HepG2 (cell line): ENCODE measurements at regions of chr22 and their contacts with region 1.

Region 1: GRCh38 chr22:42614312-42615091 is at the start of gene POLDIP3:
- DNase-seq: peak; percentile 93
- ATAC-seq: peak; percentile 79
- H3K4me3 ChIP-seq: peak within 1 kb of the TSS; percentile 75 to 90 (median 78)
- H3K27ac ChIP-seq: peak within 1 kb of the TSS; percentile 93
- H3K4me1 ChIP-seq: peaks cover 56% of the 10 kb centered on the region
- H3K27me3 ChIP-seq: no peaks in the 10 kb centered on the region; a peak in 1 of 5 replicates
- CTCF ChIP-seq: peak; percentile 75
- EP300 ChIP-seq: no peak
- POLR2A ChIP-seq: peak; percentile 51 to 61; a peak in 1 of 4 replicates
- RAD21 ChIP-seq: peak; percentile 40; the same call in 1 of the 2 replicates
- total RNA-seq, gene POLDIP3: 47.4 and 64.1 TPM in 2 replicates

Region 2: DNA sequence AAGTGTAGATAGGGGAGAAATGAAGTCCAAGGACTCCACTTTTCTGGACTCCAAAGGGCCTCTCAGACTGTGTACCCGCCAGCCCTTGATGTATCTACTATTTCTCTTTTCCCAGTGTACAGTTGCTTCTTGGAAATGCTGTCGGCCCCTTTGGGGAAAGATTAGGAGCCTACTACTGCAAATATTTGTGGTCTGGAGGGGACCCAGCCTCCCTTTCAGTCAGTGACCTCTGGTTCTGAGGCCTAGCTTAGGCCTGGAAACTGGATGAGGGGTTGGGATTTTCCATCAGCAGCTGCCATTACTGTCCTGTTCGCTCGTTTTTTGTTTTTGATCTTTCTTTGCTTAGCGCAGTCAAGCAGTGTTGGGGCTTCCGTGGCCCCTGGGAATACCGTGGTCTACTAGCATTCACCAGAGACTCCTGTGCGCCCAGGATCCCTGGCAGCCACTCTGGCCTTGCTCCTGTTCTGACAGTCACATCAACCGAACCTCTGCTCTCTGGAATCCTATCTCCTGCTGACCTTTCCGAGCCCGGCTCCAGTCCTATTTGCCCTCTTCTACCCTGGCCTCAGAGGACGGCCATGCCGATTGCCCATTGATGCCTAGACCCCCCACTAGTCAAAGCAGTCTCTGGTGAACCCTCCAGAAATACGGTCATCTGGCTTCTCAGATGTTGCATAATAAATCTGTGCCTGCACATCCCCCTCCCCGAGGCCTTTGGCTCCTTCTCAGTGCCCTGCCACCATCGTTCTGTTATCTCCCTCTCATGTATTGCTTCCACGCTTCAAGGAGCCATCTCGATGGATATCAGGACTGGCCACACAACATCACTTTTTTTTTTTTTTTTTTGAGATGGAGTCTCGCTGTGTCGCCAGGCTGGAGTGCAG is 93.6 kb before region 1 on chr22:
- CTCF ChIA-PET with region 1: no interaction called
- POLR2A ChIA-PET with region 1: interaction called, 13 read pairs
- in situ Hi-C with region 1: no loop called
- intact Hi-C with region 1: loop called (anchors 10 kb)
- DNase-seq: peak; percentile 94
- ATAC-seq: peak; percentile 69
- H3K4me3 ChIP-seq: peak overlapping the region; percentile 59 to 83 (median 76)
- H3K27ac ChIP-seq: peak overlapping the region; percentile 86
- H3K4me1 ChIP-seq: peaks cover 50% of the 10 kb centered on the region
- H3K27me3 ChIP-seq: no peaks in the 10 kb centered on the region; a peak in 1 of 5 replicates
- CTCF ChIP-seq: no peak
- EP300 ChIP-seq: peak in 1 of 2 experiments; percentile 97; a peak in 3 of 4 replicates
- POLR2A ChIP-seq: peak; percentile 39 to 51; a peak in 3 of 4 replicates
- RAD21 ChIP-seq: no peak

Region 3: GRCh38 chr22:42562238-42562665 is 52.2 kb before region 1 on chr22:
- CTCF ChIA-PET with region 1: no interaction called
- POLR2A ChIA-PET with region 1: interaction called, 10 read pairs
- in situ Hi-C with region 1: no loop called
- intact Hi-C with region 1: no loop called
- DNase-seq: peak; percentile 41
- ATAC-seq: peak; percentile 40
- H3K4me3 ChIP-seq: peak overlapping the region in 1 of 3 experiments; percentile 25; a peak in 2 of 6 replicates
- H3K27ac ChIP-seq: peak overlapping the region; percentile 43
- H3K4me1 ChIP-seq: peaks cover 33% of the 10 kb centered on the region
- H3K27me3 ChIP-seq: no peaks in the 10 kb centered on the region
- CTCF ChIP-seq: no peak
- EP300 ChIP-seq: peak in 1 of 2 experiments; percentile 45; a peak in 2 of 4 replicates
- POLR2A ChIP-seq: no peak
- RAD21 ChIP-seq: no peak

Region 4: DNA sequence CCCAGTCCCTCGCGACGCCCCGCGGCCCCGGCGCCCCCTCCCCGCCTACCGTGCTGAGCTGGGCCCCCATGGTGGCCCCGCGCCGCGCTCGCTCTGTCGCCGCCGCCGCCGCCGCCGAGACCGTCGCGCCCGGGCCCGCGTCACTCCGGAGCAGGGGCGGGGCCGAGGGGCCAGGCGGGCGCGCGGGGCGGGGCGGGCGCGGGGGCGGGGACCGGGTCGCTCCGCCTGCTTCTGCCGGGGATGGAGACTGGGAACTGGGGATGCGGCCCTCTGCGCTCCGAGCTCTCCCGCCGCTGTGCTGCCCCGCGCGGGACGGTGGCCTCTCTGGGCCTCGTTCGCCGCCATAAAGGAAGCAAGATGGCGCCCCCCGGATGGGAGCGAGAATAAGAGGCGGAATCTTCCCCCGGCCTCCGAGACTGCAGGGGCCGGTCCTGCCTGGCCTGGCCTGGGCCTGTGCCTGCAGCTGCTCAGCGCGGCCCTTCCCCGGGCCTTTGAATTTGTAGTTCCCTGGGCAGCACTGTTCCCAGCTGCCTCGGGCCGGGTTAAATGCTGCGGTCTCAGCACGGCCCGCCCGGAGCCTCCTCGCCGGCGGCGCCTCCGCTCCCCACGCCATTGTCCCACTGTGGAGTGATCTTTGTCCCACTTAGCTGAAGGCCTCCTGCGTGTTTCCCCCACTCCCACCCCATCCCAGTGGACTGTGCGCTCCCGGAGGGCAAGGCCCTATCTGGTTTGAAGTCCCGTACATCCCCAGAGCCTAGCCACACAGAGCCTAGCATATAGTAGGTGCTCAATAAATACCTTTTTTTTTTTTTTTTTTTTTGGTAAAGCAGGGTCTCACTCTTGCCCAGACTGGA is 35.0 kb after region 1 on chr22 and contains the start of gene CYB5R3:
- CTCF ChIA-PET with region 1: no interaction called
- POLR2A ChIA-PET with region 1: interaction called, 54 read pairs
- in situ Hi-C with region 1: no loop called
- intact Hi-C with region 1: no loop called
- DNase-seq: peak; percentile 51
- ATAC-seq: peak; percentile 64
- H3K4me3 ChIP-seq: peak within 1 kb of the TSS; percentile 84 to 100 (median 100)
- H3K27ac ChIP-seq: peak within 1 kb of the TSS; percentile 97
- H3K4me1 ChIP-seq: peaks cover 79% of the 10 kb centered on the region
- H3K27me3 ChIP-seq: peaks cover 0 to 6% of the 10 kb centered on the region in 2 experiments; a peak in 2 of 5 replicates
- CTCF ChIP-seq: 0 out of 2 replicates have a peak, but pooled peaks have one; percentile 17
- EP300 ChIP-seq: no peak
- POLR2A ChIP-seq: peak in 1 of 2 experiments; percentile 47; a peak in 1 of 4 replicates
- RAD21 ChIP-seq: 0 out of 2 replicates have a peak, but pooled peaks have one; percentile 26
- total RNA-seq, gene CYB5R3: 31.5 and 32.4 TPM in 2 replicates

Region 5: GRCh38 chr22:42717197-42717928 is 102.9 kb after region 1 on chr22:
- CTCF ChIA-PET with region 1: no interaction called
- POLR2A ChIA-PET with region 1: no interaction called
- in situ Hi-C with region 1: no loop called
- intact Hi-C with region 1: no loop called
- DNase-seq: no peak
- ATAC-seq: no peak
- H3K4me3 ChIP-seq: no peak overlapping the region
- H3K27ac ChIP-seq: no peak overlapping the region
- H3K4me1 ChIP-seq: peaks cover 48% of the 10 kb centered on the region
- H3K27me3 ChIP-seq: peaks cover 9 to 50% of the 10 kb centered on the region in 2 experiments
- CTCF ChIP-seq: no peak
- EP300 ChIP-seq: no peak
- POLR2A ChIP-seq: no peak
- RAD21 ChIP-seq: no peak